PC-3 (cell line): ENCODE measurements at regions of chr3 and their contacts with region 1.

Region 1: DNA sequence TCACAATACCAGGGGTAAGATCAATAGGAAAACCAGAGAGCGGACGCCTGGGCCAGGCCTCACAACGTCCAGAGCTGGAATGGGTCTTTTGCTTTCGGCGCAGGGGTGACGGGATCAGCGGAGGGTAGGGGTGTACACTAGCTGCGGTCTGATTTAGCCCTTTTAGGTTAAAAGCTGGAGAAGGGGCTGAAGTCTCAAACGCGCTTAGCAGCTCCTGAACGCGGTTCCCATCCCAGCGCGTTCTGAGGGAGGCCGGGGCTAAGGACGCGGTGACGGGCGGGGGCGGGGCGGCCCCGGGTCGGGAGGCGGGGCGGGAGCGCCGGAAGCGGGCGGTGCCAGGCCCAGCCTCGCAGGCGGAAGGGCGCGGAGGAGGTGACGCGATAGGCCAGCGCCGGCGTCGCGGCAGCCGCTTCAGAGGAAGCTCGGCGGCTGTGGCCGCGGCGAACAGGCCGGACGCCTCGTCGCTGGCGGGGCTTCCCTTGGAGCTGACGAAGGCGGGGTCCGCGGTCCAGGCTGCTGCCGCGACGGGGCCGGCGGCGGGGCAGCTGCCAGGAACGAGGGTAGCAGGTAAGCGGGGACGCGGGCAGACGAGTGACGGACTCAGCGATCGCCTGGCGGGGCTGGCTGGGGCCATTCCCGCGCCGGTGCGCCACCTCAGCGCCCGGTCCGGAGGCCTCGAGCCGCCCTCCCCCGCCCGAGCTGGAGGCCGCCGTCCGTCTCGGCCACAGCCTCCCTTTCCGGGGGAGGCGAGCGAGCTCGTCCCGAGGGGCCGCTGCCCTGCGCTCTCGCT is at the start of gene SENP5:
- DNase-seq: peak; percentile 91
- ATAC-seq: peak; percentile 95
- H3K4me3 ChIP-seq: peak within 1 kb of the TSS; percentile 97
- H3K27ac ChIP-seq: 0 out of 2 replicates have a peak within 1 kb of the TSS, but pooled peaks have one; percentile 24
- H3K4me1 ChIP-seq: peaks cover 10% of the 10 kb centered on the region
- H3K27me3 ChIP-seq: no peaks in the 10 kb centered on the region
- CTCF ChIP-seq: no peak
- total RNA-seq, gene SENP5: 31.4 and 34.2 TPM in 2 replicates

Region 2: DNA sequence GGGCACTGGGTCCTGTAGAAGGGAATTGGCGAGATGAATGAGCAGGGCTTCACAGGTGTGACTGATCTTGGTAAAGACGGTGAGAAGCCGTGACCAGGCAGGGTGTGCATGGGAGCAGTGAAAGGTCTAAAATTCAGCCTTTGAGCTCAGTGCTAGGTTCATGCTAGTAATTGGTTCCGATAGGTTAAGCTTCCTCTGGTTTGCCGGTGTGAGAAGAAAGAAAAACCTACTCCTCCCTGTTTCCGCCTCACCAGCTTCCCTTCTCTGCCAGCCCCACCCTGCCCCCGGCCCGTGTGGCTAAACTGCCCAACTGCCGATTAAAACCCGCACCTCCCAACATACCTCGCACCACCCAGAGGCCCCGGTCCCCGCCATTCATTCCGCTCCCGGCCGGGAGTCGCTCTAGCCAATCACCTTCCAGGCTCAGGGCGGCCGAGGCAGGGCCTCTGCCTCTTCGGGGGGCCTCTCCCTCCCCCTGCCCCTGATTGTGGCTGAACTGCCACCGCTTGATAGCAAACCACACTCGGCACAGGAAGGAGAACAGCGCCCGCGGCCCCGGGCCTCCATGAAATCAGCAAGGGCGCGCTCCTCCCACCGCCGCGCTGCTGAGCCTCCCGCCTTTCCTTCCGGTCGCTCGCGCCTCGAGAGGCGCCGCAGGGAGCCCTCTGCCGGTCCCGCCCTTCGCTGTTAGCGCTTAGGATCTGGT is 235.5 kb before region 1 on chr3:
- CTCF ChIA-PET with region 1: no interaction called
- POLR2A ChIA-PET with region 1: no interaction called
- intact Hi-C with region 1: no loop called
- DNase-seq: peak; percentile 79
- ATAC-seq: peak; percentile 86
- H3K4me3 ChIP-seq: peak overlapping the region; percentile 71
- H3K27ac ChIP-seq: peak overlapping the region; percentile 60
- H3K4me1 ChIP-seq: peaks cover 24% of the 10 kb centered on the region
- H3K27me3 ChIP-seq: no peaks in the 10 kb centered on the region
- CTCF ChIP-seq: peak; percentile 31; the same call in 1 of the 2 replicates

Region 3: GRCh38 chr3:196711838-196712513 is 155.7 kb before region 1 on chr3 and contains the starts of genes CEP19 and PIGX:
- CTCF ChIA-PET with region 1: no interaction called
- POLR2A ChIA-PET with region 1: interaction called, 13 read pairs
- intact Hi-C with region 1: no loop called
- DNase-seq: peak; percentile 88
- ATAC-seq: peak; percentile 83
- H3K4me3 ChIP-seq: peak within 1 kb of the TSS; percentile 95
- H3K27ac ChIP-seq: peak within 1 kb of the TSS; percentile 47
- H3K4me1 ChIP-seq: peaks cover 18% of the 10 kb centered on the region
- H3K27me3 ChIP-seq: no peaks in the 10 kb centered on the region
- CTCF ChIP-seq: no peak
- total RNA-seq, gene CEP19: 2.6 and 3.2 TPM in 2 replicates
- total RNA-seq, gene PIGX: 22.5 and 30.3 TPM in 2 replicates

Region 4: GRCh38 chr3:196837819-196838420 is 29.8 kb before region 1 on chr3:
- CTCF ChIA-PET with region 1: no interaction called
- POLR2A ChIA-PET with region 1: interaction called, 11 read pairs
- intact Hi-C with region 1: no loop called
- DNase-seq: peak; percentile 58
- ATAC-seq: peak; percentile 90
- H3K4me3 ChIP-seq: no peak overlapping the region
- H3K27ac ChIP-seq: no peak overlapping the region
- H3K4me1 ChIP-seq: no peaks in the 10 kb centered on the region
- H3K27me3 ChIP-seq: no peaks in the 10 kb centered on the region
- CTCF ChIP-seq: peak; percentile 86

Region 5: DNA sequence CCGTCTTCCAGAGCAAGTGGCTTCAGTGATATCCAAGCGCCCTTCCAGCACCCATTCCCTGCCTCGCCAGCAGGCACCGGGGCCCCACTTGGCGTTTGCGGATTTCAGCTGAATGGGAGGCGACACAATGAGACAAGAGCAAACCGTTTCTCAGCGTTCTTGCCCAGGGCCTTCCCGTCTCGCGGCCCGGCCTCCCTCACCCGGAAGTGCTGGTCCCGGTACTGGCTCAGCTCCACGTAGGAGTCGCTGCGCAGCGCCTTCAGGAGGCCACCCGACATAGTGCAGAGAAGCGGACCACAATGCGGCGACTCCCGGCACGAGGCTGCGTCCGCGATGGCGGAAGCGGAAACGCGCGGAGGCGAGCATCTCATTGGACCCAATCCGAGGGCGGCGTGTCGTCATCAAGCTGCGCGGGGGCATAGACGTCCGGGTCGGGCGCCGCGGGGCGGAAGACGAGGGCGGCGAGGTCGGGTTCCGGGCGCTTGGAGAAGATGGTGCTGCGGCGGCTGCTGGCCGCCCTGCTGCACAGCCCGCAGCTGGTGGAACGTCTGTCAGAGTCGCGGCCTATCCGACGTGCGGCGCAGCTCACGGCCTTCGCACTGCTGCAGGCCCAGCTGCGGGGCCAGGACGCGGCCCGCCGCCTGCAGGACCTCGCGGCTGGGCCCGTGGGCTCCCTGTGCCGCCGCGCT is 74.7 kb after region 1 on chr3 and contains the start of gene NCBP2:
- CTCF ChIA-PET with region 1: no interaction called
- POLR2A ChIA-PET with region 1: interaction called, 11 read pairs
- intact Hi-C with region 1: no loop called
- DNase-seq: peak; percentile 98
- ATAC-seq: peak; percentile 89
- H3K4me3 ChIP-seq: peak within 1 kb of the TSS; percentile 95
- H3K27ac ChIP-seq: peak within 1 kb of the TSS; percentile 84
- H3K4me1 ChIP-seq: peaks cover 13% of the 10 kb centered on the region
- H3K27me3 ChIP-seq: no peaks in the 10 kb centered on the region
- CTCF ChIP-seq: peak; percentile 63
- total RNA-seq, gene NCBP2: 119 and 131 TPM in 2 replicates